ENCODE measurements at regions of chr16 and their contacts with region 1.

Region 1: DNA sequence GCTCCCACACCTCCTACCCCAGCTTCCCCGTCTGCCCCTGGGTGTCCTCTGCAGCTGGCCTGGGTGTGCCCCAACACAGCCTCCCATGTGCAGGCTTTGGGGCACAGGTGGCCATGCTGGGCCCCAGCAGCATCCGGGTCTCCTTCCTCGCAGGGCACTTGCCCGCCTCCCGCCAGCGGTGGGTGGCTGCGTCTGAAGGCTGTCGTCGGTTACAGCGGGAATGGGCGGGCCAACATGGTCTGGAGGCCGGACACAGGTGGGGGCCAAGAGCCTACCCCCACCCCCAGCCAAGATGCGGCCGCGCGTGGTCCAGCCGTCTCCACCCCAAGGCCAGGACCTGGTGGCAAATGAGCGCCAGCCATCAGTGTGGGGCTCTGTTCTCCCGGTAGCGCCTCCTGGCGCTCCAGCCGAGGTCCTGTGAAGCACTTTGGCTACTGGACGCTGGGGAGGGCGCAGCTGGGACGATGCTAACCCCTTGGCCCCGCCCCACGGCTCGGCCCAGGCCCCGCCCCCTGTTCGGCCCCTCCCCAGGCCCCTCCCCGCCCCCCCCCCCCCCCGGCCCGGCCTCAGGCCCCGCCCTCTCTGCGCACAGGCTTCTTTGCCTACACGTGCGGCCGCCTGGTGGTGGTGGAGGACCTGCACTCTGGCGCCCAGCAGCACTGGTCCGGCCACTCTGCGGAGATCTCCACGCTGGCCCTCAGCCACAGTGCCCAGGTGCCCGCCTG is 7.3 kb upstream of the RHOT2 start:
- DNase-seq: peak; percentile 87 to 89
- ATAC-seq: peak; percentile 74 to 92 (median 86)
- H3K4me3 ChIP-seq: peak overlapping the region in 6 of 10 donors; percentile 31 to 45 (median 40)
- H3K27ac ChIP-seq: peak overlapping the region in 9 of 10 donors; percentile 35 to 77 (median 64)
- H3K4me1 ChIP-seq: peaks cover 0 to 16% (median 12%) of the 10 kb centered on the region in 9 donors
- H3K27me3 ChIP-seq: no peaks in the 10 kb centered on the region
- CTCF ChIP-seq: peak; percentile 20 to 79 (median 63)

Region 2: GRCh38 chr16:578870-579405 is 81.7 kb before region 1 on chr16:
- intact Hi-C with region 1: loop called in 8 of 10 experiments (anchors 5 to 10 kb)
- DNase-seq: peak; percentile 57 to 75
- ATAC-seq: peak; percentile 74 to 89 (median 80)
- H3K4me3 ChIP-seq: peak overlapping the region in 4 of 10 donors; percentile 15 to 40 (median 34)
- H3K27ac ChIP-seq: no peak overlapping the region
- H3K4me1 ChIP-seq: peaks cover 0 to 19% (median 6%) of the 10 kb centered on the region in 9 donors
- H3K27me3 ChIP-seq: no peaks in the 10 kb centered on the region
- CTCF ChIP-seq: peak; percentile 48 to 92 (median 78)

Region 3: GRCh38 chr16:583815-584591 is 76.6 kb before region 1 on chr16:
- intact Hi-C with region 1: loop called in 9 of 10 experiments (anchors 5 to 10 kb)
- DNase-seq: no peak
- ATAC-seq: no peak
- H3K4me3 ChIP-seq: no peak overlapping the region
- H3K27ac ChIP-seq: peak overlapping the region in 1 of 10 donors; percentile 65
- H3K4me1 ChIP-seq: peaks cover 10 to 47% (median 25%) of the 10 kb centered on the region in 9 donors
- H3K27me3 ChIP-seq: no peaks in the 10 kb centered on the region
- CTCF ChIP-seq: no peak

Region 4: DNA sequence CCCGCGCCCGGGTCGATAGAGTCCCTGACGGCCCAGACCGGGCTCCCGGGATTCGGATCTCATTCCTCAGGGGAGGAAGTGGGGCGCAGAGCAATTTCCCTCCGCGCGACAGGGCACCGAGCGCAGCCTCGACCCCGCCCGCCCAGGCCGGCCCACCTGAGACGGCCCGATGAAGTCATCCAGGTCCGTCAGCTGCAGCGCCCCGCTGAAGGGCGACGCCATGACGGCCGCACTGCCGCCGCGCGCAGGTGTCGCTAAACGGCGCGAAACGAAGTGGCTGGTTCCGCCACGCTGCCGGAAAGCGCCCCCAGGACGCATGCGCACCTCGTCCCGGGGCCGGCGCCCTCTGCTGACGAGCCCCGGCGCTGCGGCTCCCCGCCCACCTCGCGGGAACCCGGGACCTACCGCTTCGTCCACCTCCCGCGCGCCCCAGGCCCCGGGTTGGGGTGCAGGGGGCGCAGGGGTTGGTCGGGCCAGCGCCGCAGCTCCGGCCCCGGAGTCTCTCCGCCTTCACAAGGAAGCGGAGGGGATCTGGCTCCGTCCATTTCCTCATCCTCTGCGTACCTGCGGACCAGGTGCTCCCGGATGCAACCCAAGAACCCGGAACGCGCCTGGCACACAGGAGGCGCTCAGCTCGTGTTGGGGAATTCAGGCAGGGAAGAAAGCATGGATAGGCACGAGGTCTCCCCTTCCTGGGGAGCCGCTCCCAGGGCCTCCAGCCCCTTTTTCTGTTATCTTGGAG is 80.3 kb after region 1 on chr16 and contains the start of gene CIAO3:
- intact Hi-C with region 1: no loop called
- DNase-seq: peak; percentile 87 to 91
- ATAC-seq: peak; percentile 91 to 96 (median 92)
- H3K4me3 ChIP-seq: peak within 1 kb of the TSS; percentile 68 to 100 (median 94)
- H3K27ac ChIP-seq: peak within 1 kb of the TSS in 9 of 10 donors; percentile 44 to 90 (median 82)
- H3K4me1 ChIP-seq: peaks cover 7 to 19% (median 15%) of the 10 kb centered on the region in 9 donors
- H3K27me3 ChIP-seq: peaks cover 0 to 18% (median 4%) of the 10 kb centered on the region in 7 donors
- CTCF ChIP-seq: peak; percentile 88 to 99 (median 97)
- total RNA-seq, gene CIAO3: 18.7 to 33.0 (median 24.1) TPM

Measured in heart right ventricle (tissue), 16 donors.